Adrenal gland (tissue), 19 donors: ENCODE measurements at regions of chr6 and their contacts with region 1.

Region 1: DNA sequence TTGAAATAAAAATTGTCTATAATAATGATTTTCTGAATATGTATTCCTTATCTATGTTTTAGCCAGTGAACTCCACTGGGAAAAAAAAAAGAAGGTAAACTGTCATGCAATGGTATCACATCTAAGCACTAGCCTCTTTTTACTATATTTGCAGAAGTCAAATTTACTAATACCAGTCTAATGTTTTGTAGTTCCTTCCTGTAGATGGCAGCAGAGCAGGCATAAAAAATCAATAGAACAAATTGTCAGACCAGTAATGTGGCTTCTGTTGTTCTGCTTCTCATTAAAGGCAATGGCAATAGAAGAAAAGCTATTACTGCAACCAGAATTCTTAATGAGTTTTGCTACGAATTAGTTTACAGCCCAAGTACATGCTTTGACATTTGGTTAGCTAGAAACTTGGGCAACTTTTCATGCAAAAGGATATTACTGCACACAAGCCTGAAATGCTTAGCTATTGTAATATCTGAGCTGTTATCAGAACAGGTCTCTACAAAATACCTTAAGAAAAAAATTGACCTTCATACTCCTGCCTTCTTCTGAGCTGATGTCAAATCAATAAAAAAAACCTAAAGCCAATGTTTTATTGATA is 476.9 kb downstream of the KHDRBS2 start:
- DNase-seq: peak in 2 of 7 donors; percentile 7 to 20
- H3K4me3 ChIP-seq: no peak overlapping the region
- H3K27ac ChIP-seq: no peak overlapping the region
- H3K4me1 ChIP-seq: no peaks in the 10 kb centered on the region
- H3K27me3 ChIP-seq: no peaks in the 10 kb centered on the region
- CTCF ChIP-seq: peak; percentile 32 to 64 (median 57)
- POLR2A ChIP-seq: no peak

Region 2: GRCh38 chr6:62150048-62150663 is 341.1 kb after region 1 on chr6:
- intact Hi-C with region 1: loop called in 1 of 2 experiments (anchors 10 kb)
- DNase-seq: peak in 6 of 7 donors; percentile 33 to 65 (median 59)
- H3K4me3 ChIP-seq: no peak overlapping the region
- H3K27ac ChIP-seq: no peak overlapping the region
- H3K4me1 ChIP-seq: peaks cover 0 to 13% of the 10 kb centered on the region in 2 donors
- H3K27me3 ChIP-seq: no peaks in the 10 kb centered on the region
- CTCF ChIP-seq: peak; percentile 44 to 83 (median 68)
- POLR2A ChIP-seq: no peak

Region 3: DNA sequence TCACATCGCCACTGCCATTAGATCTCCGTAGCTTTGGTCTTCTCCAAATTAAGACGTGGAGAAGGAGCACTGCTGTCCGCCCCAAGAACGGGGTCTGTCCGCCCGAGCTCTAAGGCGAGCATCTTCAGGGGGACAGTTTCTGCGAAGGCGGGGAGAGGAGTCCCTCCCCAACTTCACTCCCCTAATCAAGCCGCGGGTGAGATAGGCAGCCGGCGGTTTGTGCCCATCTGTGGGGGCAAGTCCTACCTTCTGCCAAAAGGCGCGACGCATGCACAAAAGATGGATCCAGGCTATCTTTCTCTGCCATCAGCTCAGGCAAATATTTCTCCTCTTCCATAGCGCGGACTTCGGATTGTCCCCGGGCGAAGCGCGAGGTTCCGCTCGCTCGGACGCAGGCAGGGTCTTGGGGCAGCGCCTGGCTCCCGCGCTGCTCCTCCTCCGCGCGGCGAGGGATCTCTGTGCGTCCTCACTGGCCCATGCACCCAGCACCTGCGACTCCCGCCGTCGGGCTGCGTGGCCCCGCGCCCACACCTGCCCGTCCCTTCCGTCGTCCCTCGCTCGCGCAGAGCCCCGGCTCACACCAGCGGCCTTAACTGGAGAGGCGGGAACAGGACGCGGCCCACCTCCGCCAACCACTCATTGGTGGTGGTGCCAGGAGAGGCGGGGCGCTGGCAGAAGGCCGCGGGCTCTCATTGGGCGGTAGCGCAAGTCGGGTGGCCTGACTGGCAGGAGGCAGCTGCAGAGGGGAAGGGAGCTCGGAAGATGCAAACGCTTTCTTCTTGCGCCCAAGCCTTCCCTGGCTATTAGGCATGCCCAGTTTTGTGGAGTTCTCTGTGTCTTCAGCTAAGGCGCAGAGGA is 476.7 kb after region 1 on chr6 and contains the start of gene KHDRBS2:
- intact Hi-C with region 1: loop called in 1 of 2 experiments (anchors 10 kb)
- DNase-seq: peak; percentile 92 to 96 (median 93)
- H3K4me3 ChIP-seq: peak within 1 kb of the TSS in 3 of 4 donors; percentile 27 to 56 (median 33)
- H3K27ac ChIP-seq: peak within 1 kb of the TSS in 1 of 5 donors; percentile 77
- H3K4me1 ChIP-seq: no peaks in the 10 kb centered on the region
- H3K27me3 ChIP-seq: no peaks in the 10 kb centered on the region
- CTCF ChIP-seq: no peak
- POLR2A ChIP-seq: peak in 1 of 2 donors; percentile 58
- total RNA-seq, gene KHDRBS2: 0.42 to 4.7 (median 3.0) TPM